Activated naive CD4-positive, alpha-beta T cell treated with anti-CD3 and anti-CD28 coated beads for 36 hours (primary cell): ENCODE measurements at regions of chr1 and their contacts with region 1.

Region 1: DNA sequence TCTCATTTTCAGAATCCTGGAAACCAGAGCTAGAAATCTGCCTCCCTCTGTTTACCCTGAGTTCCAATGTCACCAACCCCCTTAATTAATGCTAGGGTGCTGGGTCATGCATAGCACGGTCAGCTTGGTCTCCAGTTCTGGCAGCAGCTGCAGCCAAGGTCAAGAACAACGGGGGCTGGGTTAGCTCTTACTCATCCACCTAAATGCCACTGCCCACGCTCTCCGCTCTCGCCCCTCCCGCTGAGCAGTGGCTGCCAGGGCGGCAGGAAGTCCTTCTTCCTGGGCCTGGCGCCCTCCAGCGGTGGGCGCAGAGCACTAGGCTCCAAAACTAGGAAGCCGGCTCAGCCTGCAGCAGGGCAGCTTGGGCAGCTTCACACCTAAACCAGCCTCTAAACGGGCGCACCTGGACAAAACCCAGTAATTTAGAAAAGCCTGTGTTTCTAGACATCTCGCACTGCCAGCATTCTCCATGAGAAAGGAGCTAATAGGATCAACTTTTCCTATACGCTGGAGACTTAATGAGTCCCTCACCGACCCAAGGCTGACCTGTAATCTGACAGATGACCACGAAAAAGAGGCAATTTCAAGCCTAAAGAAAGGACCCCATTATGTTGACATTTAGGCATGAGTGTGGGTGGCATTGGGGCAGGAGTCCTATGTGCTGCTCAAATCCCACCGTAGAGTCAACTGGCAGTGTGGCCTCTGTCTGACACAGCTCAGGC is 78.3 kb upstream of the LRRN2 start:
- DNase-seq: peak; percentile 85
- H3K4me3 Mint-ChIP-seq: no peak overlapping the region
- H3K27ac Mint-ChIP-seq: no peak overlapping the region
- H3K4me1 Mint-ChIP-seq: peaks cover 6% of the 10 kb centered on the region
- H3K27me3 Mint-ChIP-seq: peaks cover 3% of the 10 kb centered on the region

Region 2: DNA sequence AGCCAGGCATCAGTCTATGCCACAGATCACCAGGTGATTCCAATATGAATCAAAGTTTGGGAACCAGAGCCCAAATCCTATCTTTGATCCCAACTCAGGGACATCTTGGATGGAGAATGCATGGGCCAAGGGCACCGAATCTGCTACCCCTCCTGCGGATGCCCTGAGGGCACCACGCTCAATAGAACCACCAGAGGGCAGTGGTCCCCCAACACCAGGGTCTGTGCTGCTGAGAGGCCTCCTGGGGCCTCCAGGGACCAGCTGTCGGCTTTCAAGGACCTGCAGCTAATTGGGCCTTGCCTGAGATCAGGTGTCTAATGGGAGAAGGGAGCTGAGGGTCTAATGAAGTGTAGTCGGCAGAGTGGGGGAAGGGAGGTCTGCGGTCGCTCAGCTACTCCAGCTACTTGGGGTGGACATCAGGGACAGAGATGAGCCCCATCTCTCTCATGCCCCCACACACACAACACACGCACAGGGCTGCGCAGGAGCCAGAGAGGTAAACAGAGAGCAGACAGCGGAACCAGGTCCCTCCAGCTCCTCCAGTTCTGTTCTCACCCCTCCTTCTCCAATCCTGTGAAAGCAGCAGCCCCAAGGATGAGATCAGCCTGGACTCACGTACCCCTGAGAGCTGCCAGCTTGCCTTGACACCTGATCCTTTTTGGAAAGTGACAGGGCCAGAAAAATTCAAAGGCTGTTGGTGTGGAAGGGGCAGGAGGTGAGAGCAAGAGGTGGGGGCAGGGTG is 317.3 kb before region 1 on chr1:
- CTCF ChIA-PET with region 1: interaction called, 4 read pairs
- intact Hi-C with region 1: loop called (anchors 10 kb)
- DNase-seq: peak; percentile 88
- H3K4me3 Mint-ChIP-seq: no peak overlapping the region
- H3K27ac Mint-ChIP-seq: peak overlapping the region; percentile 77
- H3K4me1 Mint-ChIP-seq: peaks cover 54% of the 10 kb centered on the region
- H3K27me3 Mint-ChIP-seq: no peaks in the 10 kb centered on the region

Region 3: GRCh38 chr1:204578867-204579664 is 184.8 kb before region 1 on chr1:
- CTCF ChIA-PET with region 1: interaction called, 11 read pairs
- intact Hi-C with region 1: no loop called
- DNase-seq: peak; percentile 71
- H3K4me3 Mint-ChIP-seq: peak overlapping the region; percentile 70
- H3K27ac Mint-ChIP-seq: peak overlapping the region; percentile 87
- H3K4me1 Mint-ChIP-seq: peaks cover 26% of the 10 kb centered on the region
- H3K27me3 Mint-ChIP-seq: no peaks in the 10 kb centered on the region

Region 4: GRCh38 chr1:204746838-204747442 is 16.9 kb before region 1 on chr1:
- CTCF ChIA-PET with region 1: interaction called, 34 read pairs
- intact Hi-C with region 1: loop called (anchors 2 kb)
- DNase-seq: peak; percentile 65
- H3K4me3 Mint-ChIP-seq: no peak overlapping the region
- H3K27ac Mint-ChIP-seq: no peak overlapping the region
- H3K4me1 Mint-ChIP-seq: no peaks in the 10 kb centered on the region
- H3K27me3 Mint-ChIP-seq: peaks cover 13% of the 10 kb centered on the region

Region 5: DNA sequence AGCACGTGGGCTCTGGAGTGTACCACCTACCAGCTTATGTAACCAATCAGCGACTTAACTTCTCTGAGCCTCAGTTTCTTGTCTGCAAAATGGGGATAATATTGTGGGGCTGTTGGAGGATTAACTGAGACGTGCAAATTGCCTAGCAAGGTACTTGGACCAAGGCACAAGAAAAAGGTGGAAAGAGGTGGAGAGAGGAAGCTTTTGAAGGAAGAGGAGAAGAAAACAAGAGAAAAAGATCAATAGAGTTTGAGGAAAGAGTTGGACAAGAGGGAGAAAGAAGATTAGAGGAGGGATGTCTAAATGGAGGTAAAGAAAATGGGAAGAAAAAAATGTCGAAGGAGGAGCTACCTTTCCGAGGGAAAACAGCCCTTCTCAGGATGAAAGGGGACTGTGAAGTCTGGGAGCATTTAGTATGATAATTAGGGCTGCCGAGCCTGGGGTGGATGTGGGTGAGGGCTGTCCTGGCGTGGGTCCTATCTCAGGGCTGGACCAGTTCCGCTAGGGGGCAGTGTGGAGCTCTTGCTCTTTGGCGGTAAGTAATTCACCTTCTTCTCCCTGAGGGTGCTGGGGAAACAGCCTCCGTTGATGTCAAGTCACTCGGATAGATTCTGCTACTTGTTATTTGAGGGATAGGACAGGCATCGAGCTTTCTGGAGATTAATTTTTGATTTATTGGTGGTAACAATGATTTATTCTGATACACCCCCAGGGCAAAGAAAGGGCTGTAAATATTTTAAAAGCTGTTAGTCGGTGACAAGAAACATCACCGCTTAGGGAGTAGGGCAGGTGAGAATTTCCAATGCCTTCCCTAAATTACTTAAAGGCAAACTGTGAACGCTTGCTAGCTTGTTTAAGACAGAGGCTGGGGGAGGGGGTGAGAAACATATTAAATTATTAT is 27.8 kb after region 1 on chr1:
- CTCF ChIA-PET with region 1: interaction called, 12 read pairs
- intact Hi-C with region 1: no loop called
- DNase-seq: peak; percentile 92
- H3K4me3 Mint-ChIP-seq: no peak overlapping the region
- H3K27ac Mint-ChIP-seq: no peak overlapping the region
- H3K4me1 Mint-ChIP-seq: peaks cover 4% of the 10 kb centered on the region
- H3K27me3 Mint-ChIP-seq: peaks cover 20% of the 10 kb centered on the region